AG04450 (cell line): ENCODE measurements at regions of chr5 and their contacts with region 1.

Region 1: DNA sequence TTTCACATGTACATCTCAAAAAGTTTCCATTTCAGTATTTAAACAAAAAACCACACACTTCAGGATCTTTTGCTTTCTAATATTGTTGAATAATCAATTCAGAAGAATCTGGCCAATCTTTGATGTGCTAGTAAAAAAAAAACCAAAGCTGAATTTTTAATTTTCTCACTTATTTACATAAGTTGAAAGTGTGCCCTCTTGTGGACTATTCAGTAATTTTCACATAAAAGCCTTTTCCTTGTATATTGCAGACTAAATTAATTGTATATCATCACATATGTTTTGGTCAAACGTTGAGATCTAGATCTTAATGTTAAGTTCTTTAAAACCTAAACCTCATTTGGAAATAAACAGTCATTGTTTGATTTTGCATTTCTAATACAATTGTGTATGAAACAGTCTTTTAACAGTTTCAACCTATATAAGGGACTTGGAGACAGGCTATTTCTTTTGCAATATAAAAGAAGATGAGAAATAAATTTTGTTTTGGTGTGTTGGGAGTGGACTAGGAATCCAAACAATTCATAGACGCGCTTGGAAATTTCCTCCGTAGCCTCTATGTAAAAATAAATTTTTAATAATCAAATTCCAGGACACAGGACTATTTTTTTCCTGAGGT is 68.1 kb downstream of the NIPBL start:
- DNase-seq: peak; percentile 24
- H3K4me3 ChIP-seq: no peak overlapping the region
- H3K27ac ChIP-seq: no peak overlapping the region
- H3K27me3 ChIP-seq: no peaks in the 10 kb centered on the region
- CTCF ChIP-seq: peak; percentile 51

Region 2: DNA sequence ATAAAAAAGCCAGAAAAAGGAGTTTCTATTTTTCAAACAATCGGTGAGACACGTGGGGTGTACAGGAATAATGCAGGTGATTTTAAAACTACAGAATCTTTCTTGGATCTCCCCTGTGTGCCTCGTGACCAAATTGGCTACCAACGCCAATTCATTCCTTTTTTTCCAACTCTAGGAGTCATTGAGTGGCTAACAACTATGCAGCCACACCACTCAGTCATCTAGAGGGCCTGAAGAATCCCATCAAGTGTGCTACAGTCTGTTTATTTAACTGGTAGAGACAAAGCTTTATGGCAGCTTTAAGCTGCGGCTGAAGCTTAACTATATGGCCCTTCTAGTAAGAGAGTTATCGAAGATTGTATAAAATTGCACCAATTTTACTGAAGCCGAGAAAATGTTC is 181.3 kb before region 1 on chr5:
- CTCF ChIA-PET with region 1: no interaction called
- POLR2A ChIA-PET with region 1: no interaction called
- DNase-seq: no peak
- H3K4me3 ChIP-seq: no peak overlapping the region
- H3K27ac ChIP-seq: no peak overlapping the region
- H3K27me3 ChIP-seq: peaks cover 3% of the 10 kb centered on the region
- CTCF ChIP-seq: no peak

Region 3: GRCh38 chr5:36832299-36832698 is 112.4 kb before region 1 on chr5:
- CTCF ChIA-PET with region 1: no interaction called
- POLR2A ChIA-PET with region 1: no interaction called
- DNase-seq: no peak
- H3K4me3 ChIP-seq: no peak overlapping the region
- H3K27ac ChIP-seq: no peak overlapping the region
- H3K27me3 ChIP-seq: peaks cover 10% of the 10 kb centered on the region
- CTCF ChIP-seq: no peak

Region 4: DNA sequence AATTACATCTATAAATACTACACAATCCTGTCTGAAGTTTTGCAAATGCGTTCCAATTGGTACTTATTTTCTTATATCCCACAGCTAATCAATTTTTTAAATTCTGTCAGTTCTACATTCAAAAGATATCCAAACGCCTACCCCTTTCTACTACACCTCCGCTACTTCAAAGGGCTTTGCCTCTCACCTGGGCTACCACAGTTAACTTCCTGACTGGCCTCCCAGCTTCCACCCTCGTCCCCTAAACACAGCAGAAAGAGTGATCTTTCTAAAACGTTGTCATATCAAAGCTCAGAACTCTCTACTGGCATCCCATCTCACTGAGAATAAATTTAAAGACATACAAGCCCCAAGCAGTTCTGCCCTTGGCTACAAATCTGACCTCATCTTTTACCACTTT is 100.4 kb before region 1 on chr5:
- CTCF ChIA-PET with region 1: no interaction called
- POLR2A ChIA-PET with region 1: no interaction called
- DNase-seq: no peak
- H3K4me3 ChIP-seq: no peak overlapping the region
- H3K27ac ChIP-seq: no peak overlapping the region
- H3K27me3 ChIP-seq: no peaks in the 10 kb centered on the region
- CTCF ChIP-seq: no peak

Region 5: DNA sequence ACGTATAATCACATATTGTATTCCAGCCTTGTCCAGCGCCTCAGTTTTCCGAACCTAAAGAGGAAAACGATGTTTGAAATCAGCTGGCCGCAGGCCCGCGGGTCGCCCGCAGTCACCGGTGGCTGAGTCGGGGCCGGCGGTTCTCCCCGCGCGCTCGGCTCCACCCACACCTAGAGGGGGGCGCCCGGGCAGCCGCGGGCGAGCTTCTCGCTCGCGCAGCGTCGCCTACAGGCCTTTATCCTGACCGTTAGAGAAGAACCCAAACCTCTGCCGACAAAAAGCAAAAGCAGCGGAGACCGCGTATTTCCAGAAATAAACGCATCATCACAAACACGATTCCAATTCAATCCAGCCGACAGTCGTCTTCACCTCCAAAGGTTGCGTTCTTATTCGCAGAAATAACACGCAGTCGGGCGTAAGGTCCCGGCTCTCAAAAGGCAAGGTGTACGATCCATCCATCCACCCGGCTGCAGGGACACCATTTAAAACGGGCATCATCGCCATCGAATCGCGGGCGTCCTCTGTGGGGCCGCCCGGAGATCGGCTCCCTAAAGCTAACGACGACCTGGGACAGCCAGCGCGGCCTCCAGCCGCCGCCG is 68.8 kb before region 1 on chr5:
- CTCF ChIA-PET with region 1: interaction called, 32 read pairs
- POLR2A ChIA-PET with region 1: interaction called, 5 read pairs
- DNase-seq: peak; percentile 29
- H3K4me3 ChIP-seq: peak overlapping the region; percentile 83
- H3K27ac ChIP-seq: peak overlapping the region; percentile 84
- H3K27me3 ChIP-seq: no peaks in the 10 kb centered on the region
- CTCF ChIP-seq: peak; percentile 71

Region 6: GRCh38 chr5:37014321-37014720 is 69.6 kb after region 1 on chr5:
- CTCF ChIA-PET with region 1: no interaction called
- POLR2A ChIA-PET with region 1: no interaction called
- DNase-seq: no peak
- H3K4me3 ChIP-seq: no peak overlapping the region
- H3K27ac ChIP-seq: no peak overlapping the region
- H3K27me3 ChIP-seq: no peaks in the 10 kb centered on the region
- CTCF ChIP-seq: no peak